HEK293 (cell line): ENCODE measurements at regions of chr1 and their contacts with region 1.

Region 1: DNA sequence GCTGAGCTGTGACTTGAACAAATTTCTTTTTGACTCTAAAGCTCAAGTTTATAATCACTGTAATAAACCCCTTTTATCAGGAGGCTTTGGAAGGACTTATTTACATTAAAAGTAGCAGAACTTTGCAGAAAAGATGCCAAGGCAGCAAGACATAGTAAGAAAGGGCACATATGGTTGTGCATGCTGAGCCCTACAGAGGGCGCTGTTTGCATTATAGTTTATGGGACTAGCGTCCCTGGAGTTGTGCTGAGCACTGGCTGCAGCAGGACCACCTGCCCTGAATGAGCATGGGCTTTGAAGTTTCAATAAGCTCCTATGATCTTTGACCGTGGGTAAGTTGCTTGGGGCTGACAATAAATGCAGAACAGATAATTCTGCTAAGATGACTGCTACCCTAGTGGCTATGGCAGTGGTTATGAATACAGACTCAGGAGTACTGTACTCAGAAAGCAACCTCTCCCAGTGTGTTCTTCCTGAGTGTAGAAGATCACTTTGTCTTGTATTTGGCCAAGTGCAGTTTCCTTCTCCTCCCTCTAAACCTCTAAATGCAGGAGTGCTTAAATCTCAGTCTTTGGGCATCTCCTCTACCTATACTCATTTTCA is 45.4 kb upstream of the USP1 start:
- H3K4me3 ChIP-seq: no peak overlapping the region
- H3K27ac ChIP-seq: no peak overlapping the region
- H3K4me1 ChIP-seq: peaks cover 5% of the 10 kb centered on the region
- CTCF ChIP-seq: peak; percentile 66

Region 2: DNA sequence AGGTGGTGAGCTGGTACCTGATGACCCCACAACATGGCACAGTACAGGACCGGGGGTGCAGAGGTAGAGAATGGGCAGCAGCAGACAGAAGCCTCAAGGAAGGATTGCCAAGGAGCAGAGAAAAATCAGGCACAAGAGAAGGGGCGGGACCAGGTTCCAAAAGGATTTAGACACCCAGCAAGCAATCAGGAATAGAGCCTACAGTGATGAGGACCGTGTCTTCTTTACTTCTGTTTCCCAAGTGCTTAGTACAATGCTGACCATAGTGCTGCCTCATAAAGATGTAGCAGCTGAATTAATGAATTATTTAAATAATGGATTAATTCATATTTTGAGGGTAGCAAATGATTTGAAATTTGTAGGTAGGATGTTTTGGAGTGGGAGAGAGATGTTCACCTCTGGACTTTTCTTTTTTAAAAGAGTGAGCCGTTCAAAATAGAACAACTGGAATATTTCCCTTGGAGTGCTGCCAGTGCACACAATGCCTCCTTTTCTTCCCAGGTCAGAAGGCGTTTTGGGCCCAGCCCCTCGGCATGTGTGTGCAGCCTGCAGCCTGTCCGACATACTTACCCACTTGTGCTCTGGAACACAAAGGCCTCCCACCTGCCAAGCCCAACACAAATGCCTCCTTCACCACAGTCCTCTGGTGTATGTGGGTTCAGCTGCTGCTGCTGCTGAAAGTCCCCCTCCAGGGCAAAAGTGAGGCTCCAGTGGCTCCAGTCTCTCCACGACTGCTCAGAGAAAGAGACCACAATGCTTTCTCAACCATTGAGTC is 91.9 kb before region 1 on chr1:
- CTCF ChIA-PET with region 1: interaction called, 11 read pairs
- POLR2A ChIA-PET with region 1: no interaction called
- H3K4me3 ChIP-seq: no peak overlapping the region
- H3K27ac ChIP-seq: no peak overlapping the region; the same call in 1 of the 2 replicates
- H3K4me1 ChIP-seq: peaks cover 16% of the 10 kb centered on the region
- CTCF ChIP-seq: no peak

Region 3: GRCh38 chr1:62311473-62311943 is 80.0 kb before region 1 on chr1:
- CTCF ChIA-PET with region 1: interaction called, 21 read pairs
- POLR2A ChIA-PET with region 1: no interaction called
- H3K4me3 ChIP-seq: no peak overlapping the region
- H3K27ac ChIP-seq: no peak overlapping the region
- H3K4me1 ChIP-seq: peaks cover 9% of the 10 kb centered on the region
- CTCF ChIP-seq: no peak

Region 4: DNA sequence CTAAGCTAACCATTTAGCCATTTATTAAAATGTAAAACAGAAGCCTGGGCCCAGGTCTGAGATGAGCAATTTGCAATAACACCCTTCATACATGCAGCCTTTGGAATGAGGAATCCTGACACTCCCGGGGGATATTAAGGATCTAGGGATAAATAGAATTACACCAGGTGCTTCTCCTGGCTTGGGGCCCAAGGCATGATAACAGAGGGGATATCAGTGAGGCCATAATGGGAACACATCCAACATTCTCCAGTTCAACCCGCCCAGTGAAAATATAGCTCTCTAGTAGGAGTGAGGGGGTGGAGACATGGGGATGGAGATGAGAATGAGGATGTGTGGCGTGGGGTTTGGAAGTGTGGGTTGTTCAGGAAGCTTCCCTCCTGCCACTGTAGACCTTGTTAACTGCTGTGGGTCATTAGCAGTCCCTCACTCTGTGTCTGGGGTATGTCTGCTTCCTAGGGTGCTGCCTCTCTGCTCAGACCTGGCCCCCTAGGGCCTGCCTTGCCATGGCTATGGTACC is 14.4 kb before region 1 on chr1:
- CTCF ChIA-PET with region 1: interaction called, 15 read pairs
- POLR2A ChIA-PET with region 1: no interaction called
- H3K4me3 ChIP-seq: no peak overlapping the region
- H3K27ac ChIP-seq: no peak overlapping the region
- H3K4me1 ChIP-seq: no peaks in the 10 kb centered on the region
- CTCF ChIP-seq: no peak

Region 5: DNA sequence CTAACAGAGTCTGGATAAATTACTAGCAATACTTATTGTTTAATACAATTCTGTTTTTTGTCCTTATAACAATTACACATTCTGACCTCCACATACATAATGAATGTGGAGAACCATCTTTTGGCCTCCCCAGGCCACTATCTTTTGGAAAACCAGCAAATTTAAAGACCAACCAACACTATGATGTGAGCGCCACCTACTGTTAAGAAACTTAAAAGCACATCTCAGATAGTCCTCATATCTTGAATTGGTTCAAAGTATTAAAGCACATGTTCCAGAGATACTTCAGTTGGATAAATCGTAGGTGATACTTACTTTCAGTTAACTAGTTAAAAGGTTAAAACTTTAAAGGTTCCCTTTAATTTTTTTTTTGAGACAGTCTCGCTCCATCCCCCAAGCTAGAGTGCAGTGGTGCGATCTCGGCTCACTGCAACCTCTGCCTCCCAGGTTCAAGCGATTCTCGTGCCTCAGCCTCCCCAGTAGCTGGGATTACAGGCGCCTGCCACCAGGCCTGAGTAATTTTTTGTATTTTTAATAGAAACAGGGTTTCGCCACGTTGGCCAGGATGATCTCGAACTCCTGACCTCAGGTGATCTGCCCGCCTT is 16.0 kb after region 1 on chr1:
- CTCF ChIA-PET with region 1: interaction called, 91 read pairs
- POLR2A ChIA-PET with region 1: no interaction called
- H3K4me3 ChIP-seq: no peak overlapping the region
- H3K27ac ChIP-seq: no peak overlapping the region
- H3K4me1 ChIP-seq: no peaks in the 10 kb centered on the region
- CTCF ChIP-seq: no peak